Endothelial cell of umbilical vein (primary cell): ENCODE measurements at regions of chr3 and their contacts with region 1.

Region 1: DNA sequence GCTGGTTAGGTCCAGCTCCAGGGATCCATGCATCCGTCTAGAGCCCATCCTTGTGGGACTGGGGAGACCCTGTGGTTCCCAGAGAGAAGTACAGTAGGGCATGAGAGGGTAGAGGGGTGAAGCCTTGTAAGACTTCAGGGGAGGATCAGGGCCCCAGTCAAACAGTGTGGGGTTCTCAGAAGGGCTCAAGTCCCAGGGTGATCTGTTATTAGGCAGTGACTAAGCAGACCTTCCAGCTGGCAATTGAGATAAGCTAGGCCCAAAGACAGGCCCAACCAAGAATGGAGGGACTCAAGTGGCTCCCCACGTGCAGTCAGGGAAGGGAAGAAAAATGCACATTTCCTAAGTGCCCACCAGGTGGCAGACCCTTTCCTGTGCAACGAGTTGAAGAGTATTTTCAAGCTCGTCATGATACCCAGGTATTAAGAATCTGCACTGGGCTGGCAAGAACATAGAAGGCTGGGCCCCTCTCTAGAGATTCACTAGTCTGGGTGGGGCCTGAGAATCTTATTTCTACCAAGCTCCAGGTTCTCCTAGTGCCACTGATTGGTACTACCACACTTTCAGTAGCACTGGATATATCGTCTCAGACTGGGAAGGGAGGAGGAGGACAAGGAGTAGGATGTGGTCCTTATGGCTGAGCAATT is 240.8 kb downstream of the NR1D2 start:
- DNase-seq: peak; percentile 67
- H3K4me3 ChIP-seq: no peak overlapping the region
- H3K27ac ChIP-seq: no peak overlapping the region
- H3K4me1 ChIP-seq: no peaks in the 10 kb centered on the region
- H3K27me3 ChIP-seq: no peaks in the 10 kb centered on the region
- CTCF ChIP-seq: peak; percentile 63 to 65
- POLR2A ChIP-seq: no peak

Region 2: DNA sequence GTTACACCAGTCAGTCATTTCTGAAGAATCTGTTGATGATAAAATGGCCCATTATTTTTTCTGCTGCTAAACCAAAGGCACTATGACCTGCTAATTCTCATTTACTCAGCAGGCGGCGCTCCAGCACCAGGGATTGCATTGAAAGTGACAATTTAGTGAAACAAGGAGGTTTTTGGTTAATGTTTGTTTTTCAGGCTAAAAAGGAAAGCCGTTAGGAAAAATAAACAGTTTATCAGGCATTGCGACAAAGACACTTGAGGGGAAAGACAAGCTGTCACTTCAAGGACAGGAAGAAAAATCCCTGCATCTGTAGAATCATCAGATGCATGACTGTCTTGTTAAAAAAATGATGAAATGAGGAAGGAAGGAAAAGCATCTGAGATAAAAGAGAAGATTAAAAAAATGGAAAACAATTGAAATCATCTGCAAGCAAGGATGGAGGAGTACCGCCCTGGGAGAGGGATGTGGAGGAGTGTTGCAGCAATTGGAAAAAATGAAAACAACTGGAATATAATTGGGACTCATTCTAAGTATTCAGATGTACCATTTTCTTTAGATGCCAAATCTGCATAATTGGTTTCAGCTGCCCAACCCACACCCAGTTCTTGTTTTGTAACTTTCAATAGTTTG is 186.7 kb before region 1 on chr3:
- CTCF ChIA-PET with region 1: interaction called, 4 read pairs
- POLR2A ChIA-PET with region 1: no interaction called
- dilution Hi-C with region 1: no loop called
- intact Hi-C with region 1: loop called (anchors 1 kb)
- DNase-seq: peak; percentile 79
- H3K4me3 ChIP-seq: no peak overlapping the region
- H3K27ac ChIP-seq: no peak overlapping the region
- H3K4me1 ChIP-seq: peaks cover 3% of the 10 kb centered on the region
- H3K27me3 ChIP-seq: peaks cover 4 to 8% of the 10 kb centered on the region in 2 experiments
- CTCF ChIP-seq: peak; percentile 67 to 87
- POLR2A ChIP-seq: no peak

Region 3: DNA sequence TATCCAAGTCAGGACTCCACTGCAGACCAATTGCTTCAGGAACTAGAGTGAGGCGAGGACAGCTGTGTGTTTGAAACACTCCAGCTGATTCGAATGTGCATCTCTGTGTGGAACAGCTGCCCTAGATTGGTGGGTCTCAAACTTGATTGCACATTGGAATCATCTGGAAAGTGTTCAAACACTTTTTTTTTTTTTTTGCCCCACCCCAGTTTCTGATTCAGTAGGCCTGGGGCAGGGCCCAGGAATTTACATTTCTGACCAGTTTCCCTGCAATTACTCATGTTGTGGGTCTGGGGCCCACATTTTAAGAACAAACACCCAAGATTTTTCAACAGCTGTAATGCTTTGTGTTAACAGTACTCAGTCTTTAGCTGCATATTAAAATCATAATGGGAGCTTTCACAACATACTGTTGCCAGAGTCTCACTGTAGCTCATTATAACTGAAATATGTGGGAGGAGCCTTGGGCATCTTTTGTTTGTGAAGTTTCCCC is 84.1 kb before region 1 on chr3:
- CTCF ChIA-PET with region 1: no interaction called
- POLR2A ChIA-PET with region 1: no interaction called
- dilution Hi-C with region 1: no loop called
- intact Hi-C with region 1: no loop called
- DNase-seq: no peak
- H3K4me3 ChIP-seq: no peak overlapping the region
- H3K27ac ChIP-seq: no peak overlapping the region
- H3K4me1 ChIP-seq: no peaks in the 10 kb centered on the region
- H3K27me3 ChIP-seq: no peaks in the 10 kb centered on the region
- CTCF ChIP-seq: no peak
- POLR2A ChIP-seq: no peak

Region 4: DNA sequence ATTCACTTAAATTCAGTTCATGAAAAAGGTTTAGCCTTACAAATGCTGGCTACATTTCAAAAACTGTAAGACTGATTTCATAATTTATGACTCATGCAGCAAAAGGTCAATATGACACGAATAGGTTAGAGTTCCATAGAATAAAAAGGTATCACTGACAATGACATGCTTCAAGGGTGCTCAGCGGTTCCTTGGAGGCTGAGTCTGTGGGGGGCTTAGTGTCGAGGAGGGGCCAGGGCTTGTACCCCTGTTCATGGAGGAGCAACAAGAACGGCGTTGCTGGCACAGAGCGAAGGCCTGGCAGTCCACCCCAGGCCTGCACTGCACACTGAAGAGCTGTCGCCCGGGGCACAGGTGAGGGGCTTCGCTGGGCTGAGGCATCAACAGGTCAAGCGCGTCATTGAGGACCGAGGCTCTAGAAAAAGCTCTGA is 66.5 kb before region 1 on chr3:
- CTCF ChIA-PET with region 1: no interaction called
- POLR2A ChIA-PET with region 1: no interaction called
- dilution Hi-C with region 1: no loop called
- intact Hi-C with region 1: no loop called
- DNase-seq: no peak
- H3K4me3 ChIP-seq: no peak overlapping the region
- H3K27ac ChIP-seq: no peak overlapping the region
- H3K4me1 ChIP-seq: no peaks in the 10 kb centered on the region
- H3K27me3 ChIP-seq: no peaks in the 10 kb centered on the region
- CTCF ChIP-seq: no peak
- POLR2A ChIP-seq: no peak

Region 5: DNA sequence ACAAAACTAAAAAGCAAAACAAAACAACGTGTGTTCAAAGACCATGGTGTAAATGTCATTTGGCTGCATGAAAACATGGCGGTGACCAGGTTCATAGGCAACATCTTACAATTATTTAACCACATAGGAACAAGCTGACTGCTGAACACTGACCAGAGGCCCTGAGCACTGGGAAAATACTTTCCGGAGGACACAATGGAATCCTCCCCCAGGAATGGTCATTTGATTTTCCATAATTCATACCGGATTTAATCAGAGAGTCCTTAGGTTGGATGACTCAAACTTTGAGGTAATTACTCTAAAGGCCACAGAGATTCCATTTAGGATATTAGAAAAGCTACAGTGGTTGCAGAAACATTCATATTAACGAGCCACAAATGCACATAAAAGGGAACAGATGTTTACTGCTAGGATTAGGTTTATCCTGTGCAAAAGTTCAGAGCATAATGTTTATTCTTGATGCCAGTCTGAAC is 13.9 kb after region 1 on chr3:
- CTCF ChIA-PET with region 1: interaction called, 21 read pairs
- POLR2A ChIA-PET with region 1: no interaction called
- dilution Hi-C with region 1: no loop called
- intact Hi-C with region 1: no loop called
- DNase-seq: no peak
- H3K4me3 ChIP-seq: no peak overlapping the region
- H3K27ac ChIP-seq: no peak overlapping the region
- H3K4me1 ChIP-seq: no peaks in the 10 kb centered on the region
- H3K27me3 ChIP-seq: no peaks in the 10 kb centered on the region
- CTCF ChIP-seq: no peak
- POLR2A ChIP-seq: no peak

Region 6: GRCh38 chr3:24264748-24265158 is 78.9 kb after region 1 on chr3:
- CTCF ChIA-PET with region 1: interaction called, 14 read pairs
- POLR2A ChIA-PET with region 1: no interaction called
- dilution Hi-C with region 1: no loop called
- intact Hi-C with region 1: no loop called
- DNase-seq: peak; percentile 58
- H3K4me3 ChIP-seq: no peak overlapping the region
- H3K27ac ChIP-seq: no peak overlapping the region
- H3K4me1 ChIP-seq: no peaks in the 10 kb centered on the region
- H3K27me3 ChIP-seq: no peaks in the 10 kb centered on the region
- CTCF ChIP-seq: peak; percentile 57 to 62
- POLR2A ChIP-seq: no peak

Region 7: DNA sequence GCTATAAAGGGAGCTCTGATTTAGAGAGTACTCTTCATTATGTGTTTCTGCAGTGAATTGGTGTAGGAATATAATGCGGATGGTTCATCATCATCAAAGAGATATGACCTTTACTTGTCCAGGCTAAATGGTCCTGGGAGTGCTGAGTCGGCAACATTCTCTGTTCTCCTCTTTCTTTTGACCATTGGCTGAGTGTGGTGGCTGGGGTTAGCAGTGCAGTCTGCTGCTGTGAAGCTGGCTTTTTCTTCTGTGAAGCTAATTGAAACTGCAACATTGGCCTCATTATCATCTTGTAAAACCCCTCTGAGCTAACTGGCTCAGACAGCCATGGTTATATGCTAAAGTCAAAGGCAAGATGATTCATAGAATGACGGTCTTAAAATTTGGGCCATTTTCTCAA is 225.0 kb after region 1 on chr3:
- CTCF ChIA-PET with region 1: no interaction called
- POLR2A ChIA-PET with region 1: no interaction called
- dilution Hi-C with region 1: no loop called
- intact Hi-C with region 1: no loop called
- DNase-seq: no peak
- H3K4me3 ChIP-seq: no peak overlapping the region
- H3K27ac ChIP-seq: no peak overlapping the region
- H3K4me1 ChIP-seq: no peaks in the 10 kb centered on the region
- H3K27me3 ChIP-seq: no peaks in the 10 kb centered on the region
- CTCF ChIP-seq: no peak
- POLR2A ChIP-seq: no peak

Region 8: DNA sequence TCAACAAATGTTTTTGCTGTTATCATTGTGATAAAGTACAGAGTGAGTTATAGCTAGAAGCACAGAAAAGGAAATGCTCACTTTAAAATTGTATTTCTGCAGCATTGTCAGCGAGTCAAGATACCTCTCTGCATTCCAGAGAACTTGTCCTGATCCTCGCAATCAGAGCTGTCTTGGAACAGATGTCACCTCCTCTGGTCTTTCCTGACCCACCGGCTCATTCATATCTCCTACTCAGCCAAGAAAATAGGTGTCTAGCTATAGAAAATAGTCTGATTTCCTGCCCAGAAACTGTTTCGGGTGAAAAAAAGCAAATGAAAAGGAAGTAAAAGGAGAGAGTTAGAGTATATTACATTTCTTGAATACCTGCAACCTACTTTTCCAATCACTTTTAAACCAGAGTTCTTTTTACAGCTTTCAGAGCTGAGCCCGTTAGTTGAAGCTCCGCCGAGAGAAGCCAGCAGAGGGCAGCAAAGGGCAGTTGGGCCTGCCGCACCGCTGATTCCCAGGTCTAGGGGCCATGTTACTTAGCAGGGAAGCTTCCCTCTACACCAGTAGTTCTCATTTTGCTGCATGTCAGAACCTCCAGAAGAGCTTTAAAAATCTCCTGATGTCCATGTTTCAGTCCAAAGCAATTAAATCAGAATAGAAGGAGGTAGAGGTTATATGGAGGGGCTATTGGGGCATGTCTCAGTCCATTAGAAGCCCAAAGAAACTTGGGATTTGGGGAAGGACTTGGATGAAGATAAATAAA is 494.5 kb after region 1 on chr3:
- CTCF ChIA-PET with region 1: interaction called, 99 read pairs
- POLR2A ChIA-PET with region 1: no interaction called
- dilution Hi-C with region 1: no loop called
- intact Hi-C with region 1: loop called (anchors 1 kb)
- DNase-seq: peak; percentile 57
- H3K4me3 ChIP-seq: no peak overlapping the region
- H3K27ac ChIP-seq: no peak overlapping the region
- H3K4me1 ChIP-seq: no peaks in the 10 kb centered on the region
- H3K27me3 ChIP-seq: peaks cover 0 to 2% of the 10 kb centered on the region in 2 experiments
- CTCF ChIP-seq: peak; percentile 88 to 92
- POLR2A ChIP-seq: no peak